ENCODE measurements at regions of chr13 and their contacts with region 1.

Region 1: GRCh38 chr13:97855570-97856303 is 97.7 kb upstream of the IPO5 start:
- DNase-seq: peak; percentile 81
- H3K4me3 ChIP-seq: no peak overlapping the region
- H3K27ac ChIP-seq: peak overlapping the region in 1 of 4 donors; percentile 23
- H3K4me1 ChIP-seq: peaks cover 0 to 10% (median 9%) of the 10 kb centered on the region in 4 donors
- H3K27me3 ChIP-seq: no peaks in the 10 kb centered on the region
- CTCF ChIP-seq: peak; percentile 74 to 84 (median 79)
- EP300 ChIP-seq: no peak
- POLR2A ChIP-seq: no peak

Region 2: GRCh38 chr13:97512731-97513130 is 343.0 kb before region 1 on chr13:
- intact Hi-C with region 1: no loop called
- DNase-seq: no peak
- H3K4me3 ChIP-seq: no peak overlapping the region
- H3K27ac ChIP-seq: no peak overlapping the region
- H3K4me1 ChIP-seq: no peaks in the 10 kb centered on the region
- H3K27me3 ChIP-seq: no peaks in the 10 kb centered on the region
- CTCF ChIP-seq: no peak
- EP300 ChIP-seq: no peak
- POLR2A ChIP-seq: no peak

Region 3: DNA sequence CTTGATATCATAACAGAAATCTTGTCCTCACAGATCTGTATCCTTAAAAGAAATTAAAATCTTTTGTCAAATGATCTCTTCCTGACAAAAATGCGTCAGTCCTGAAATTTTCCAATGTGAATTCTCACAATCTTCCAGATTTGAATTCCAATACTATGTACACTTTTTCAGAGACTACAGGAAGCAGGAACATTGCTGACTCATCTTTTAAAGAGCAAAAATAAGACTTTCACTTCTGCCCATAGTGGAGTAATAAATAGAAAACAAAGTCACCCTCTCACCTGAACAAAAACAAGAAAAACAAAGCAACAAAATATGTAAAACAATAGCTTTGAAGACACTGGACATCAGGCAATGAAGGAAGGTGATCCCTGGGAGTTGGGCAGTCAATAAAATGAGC is 69.2 kb before region 1 on chr13:
- intact Hi-C with region 1: no loop called
- DNase-seq: no peak
- H3K4me3 ChIP-seq: no peak overlapping the region
- H3K27ac ChIP-seq: no peak overlapping the region
- H3K4me1 ChIP-seq: no peaks in the 10 kb centered on the region
- H3K27me3 ChIP-seq: no peaks in the 10 kb centered on the region
- CTCF ChIP-seq: no peak
- EP300 ChIP-seq: no peak
- POLR2A ChIP-seq: no peak

Region 4: DNA sequence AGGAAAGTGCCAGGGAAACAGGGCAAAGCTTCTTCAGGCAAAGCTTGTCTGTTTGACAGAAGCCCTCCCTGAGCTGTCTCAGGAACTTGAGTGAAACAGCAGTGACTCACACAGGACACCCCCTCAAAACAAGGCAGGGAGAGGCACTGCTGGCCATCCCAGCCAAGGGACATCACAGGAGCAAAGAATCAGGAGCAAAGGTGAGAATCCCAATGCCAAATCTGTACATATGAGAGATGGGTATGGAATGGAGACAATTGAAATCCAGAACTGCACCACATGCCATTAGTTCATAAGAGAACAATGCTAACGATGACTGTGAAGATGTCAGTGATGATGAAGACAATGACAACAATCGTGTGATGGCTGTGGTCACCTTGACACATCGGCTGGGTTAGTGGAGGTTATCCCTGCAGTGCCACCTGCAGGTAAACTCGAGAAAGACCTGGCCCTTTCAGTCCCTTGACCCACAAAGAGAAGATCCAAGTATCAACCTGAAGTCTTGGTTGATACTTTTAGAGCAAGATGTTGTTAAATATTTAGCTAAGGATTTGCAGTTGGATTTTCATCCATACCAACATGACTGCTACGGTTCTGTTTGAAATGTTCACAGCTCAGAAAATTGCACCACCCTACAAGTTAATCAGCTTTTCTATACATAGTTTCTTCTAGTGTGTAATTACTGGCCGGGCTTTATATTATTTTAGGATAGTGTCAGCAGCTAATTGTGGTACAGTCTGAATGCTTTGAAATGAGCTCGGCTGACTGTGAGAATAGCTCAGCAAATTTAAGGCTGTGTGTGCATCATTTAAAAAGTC is 55.8 kb after region 1 on chr13:
- intact Hi-C with region 1: loop called (anchors 5 kb)
- DNase-seq: no peak
- H3K4me3 ChIP-seq: no peak overlapping the region
- H3K27ac ChIP-seq: no peak overlapping the region
- H3K4me1 ChIP-seq: no peaks in the 10 kb centered on the region
- H3K27me3 ChIP-seq: no peaks in the 10 kb centered on the region
- CTCF ChIP-seq: peak; percentile 30 to 58 (median 32)
- EP300 ChIP-seq: no peak
- POLR2A ChIP-seq: no peak

Region 5: DNA sequence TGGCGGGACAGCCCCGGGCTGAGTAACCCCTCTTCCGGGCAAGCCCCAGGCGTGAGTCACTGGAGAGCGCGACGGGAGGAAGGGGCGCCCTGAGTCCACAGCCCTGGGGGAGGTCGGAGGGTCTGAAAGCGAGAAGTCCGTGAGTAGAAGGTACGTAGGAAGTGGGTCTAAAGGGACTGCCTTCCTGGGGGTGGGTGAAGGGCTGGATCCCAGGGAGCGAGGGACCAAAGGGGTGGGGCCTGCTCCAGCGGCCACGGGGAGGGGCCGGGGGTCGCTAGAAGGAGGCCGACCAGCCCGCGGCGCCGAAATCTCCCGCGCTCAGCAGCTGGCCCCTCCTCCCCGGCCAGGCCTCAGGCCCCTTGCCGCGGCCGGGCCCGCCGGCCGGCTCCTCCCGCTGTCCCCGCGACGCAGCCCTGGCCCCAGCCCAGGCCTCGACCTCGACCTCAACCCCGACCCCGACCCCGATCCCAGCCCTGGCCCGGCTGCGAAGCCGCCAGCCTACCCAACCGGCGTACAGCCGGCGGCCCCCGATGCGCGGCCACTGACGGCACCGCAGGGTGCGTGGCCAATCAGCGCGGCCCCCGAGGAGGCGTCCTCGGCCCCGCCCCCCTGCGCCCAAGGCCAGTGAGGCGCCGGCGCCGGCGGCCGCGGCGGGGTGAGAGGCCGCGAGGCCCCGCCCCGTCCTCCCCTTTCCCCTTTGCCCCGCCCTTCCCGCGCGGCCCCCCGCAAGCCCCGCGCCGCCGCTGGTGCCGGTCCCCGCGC is 120.3 kb after region 1 on chr13:
- intact Hi-C with region 1: loop called (anchors 5 kb)
- DNase-seq: peak; percentile 93
- H3K4me3 ChIP-seq: peak overlapping the region; percentile 78 to 97 (median 86)
- H3K27ac ChIP-seq: peak overlapping the region; percentile 96 to 99 (median 97)
- H3K4me1 ChIP-seq: peaks cover 13 to 48% (median 44%) of the 10 kb centered on the region in 4 donors
- H3K27me3 ChIP-seq: no peaks in the 10 kb centered on the region
- CTCF ChIP-seq: peak in 1 of 3 experiments; percentile 16
- EP300 ChIP-seq: no peak
- POLR2A ChIP-seq: peak; percentile 73

Region 6: GRCh38 chr13:98173431-98174152 is 317.9 kb after region 1 on chr13:
- intact Hi-C with region 1: no loop called
- DNase-seq: no peak
- H3K4me3 ChIP-seq: no peak overlapping the region
- H3K27ac ChIP-seq: peak overlapping the region; percentile 34 to 72 (median 63)
- H3K4me1 ChIP-seq: peaks cover 36 to 43% (median 41%) of the 10 kb centered on the region in 4 donors
- H3K27me3 ChIP-seq: no peaks in the 10 kb centered on the region
- CTCF ChIP-seq: no peak
- EP300 ChIP-seq: no peak
- POLR2A ChIP-seq: no peak

Region 7: DNA sequence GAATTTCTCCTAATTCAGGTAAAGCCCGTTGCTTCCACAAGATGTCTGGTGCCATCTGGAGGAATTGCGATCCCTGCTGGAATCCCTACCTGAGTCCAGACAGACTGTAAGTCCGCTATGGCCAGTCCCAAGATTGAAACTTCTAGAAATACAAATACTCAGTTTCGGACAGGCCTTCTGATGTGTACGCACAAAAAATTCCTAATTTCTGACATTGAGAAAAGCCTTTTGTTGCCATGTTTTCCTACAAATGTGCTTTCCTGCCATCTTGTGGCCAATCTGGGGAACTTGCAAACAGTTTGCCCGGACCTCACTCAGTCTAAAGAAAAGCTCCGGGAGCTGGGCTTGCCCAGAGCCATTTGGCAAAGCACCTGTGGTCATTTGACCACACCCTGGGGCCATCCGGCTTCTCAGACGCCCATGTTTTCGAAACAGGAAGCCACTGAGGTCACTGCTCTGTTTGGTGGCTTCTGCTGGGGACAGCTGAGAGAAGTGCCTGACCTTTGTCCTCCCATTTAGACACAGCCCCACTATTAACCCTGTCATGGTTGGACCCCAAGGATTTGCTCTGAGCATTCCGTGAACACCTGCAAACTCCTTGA is 817.3 kb after region 1 on chr13:
- intact Hi-C with region 1: loop called (anchors 10 kb)
- DNase-seq: no peak
- H3K4me3 ChIP-seq: peak overlapping the region in 1 of 4 donors; percentile 12
- H3K27ac ChIP-seq: no peak overlapping the region
- H3K4me1 ChIP-seq: peaks cover 8 to 13% (median 8%) of the 10 kb centered on the region in 4 donors
- H3K27me3 ChIP-seq: no peaks in the 10 kb centered on the region
- CTCF ChIP-seq: peak; percentile 82 to 88 (median 83)
- EP300 ChIP-seq: no peak
- POLR2A ChIP-seq: no peak